Astrocyte of the cerebellum (primary cell): ENCODE measurements at regions of chr20 and their contacts with region 1.

Region 1: GRCh38 chr20:36773597-36774390 is at the start of gene DSN1:
- DNase-seq: peak; percentile 92
- H3K4me3 ChIP-seq: peak within 1 kb of the TSS; percentile 70
- CTCF ChIP-seq: peak; percentile 75

Region 2: GRCh38 chr20:36493013-36493800 is 280.6 kb before region 1 on chr20:
- in situ Hi-C with region 1: loop called (anchors 25 kb)
- DNase-seq: no peak
- H3K4me3 ChIP-seq: no peak overlapping the region
- CTCF ChIP-seq: peak; percentile 23

Region 3: DNA sequence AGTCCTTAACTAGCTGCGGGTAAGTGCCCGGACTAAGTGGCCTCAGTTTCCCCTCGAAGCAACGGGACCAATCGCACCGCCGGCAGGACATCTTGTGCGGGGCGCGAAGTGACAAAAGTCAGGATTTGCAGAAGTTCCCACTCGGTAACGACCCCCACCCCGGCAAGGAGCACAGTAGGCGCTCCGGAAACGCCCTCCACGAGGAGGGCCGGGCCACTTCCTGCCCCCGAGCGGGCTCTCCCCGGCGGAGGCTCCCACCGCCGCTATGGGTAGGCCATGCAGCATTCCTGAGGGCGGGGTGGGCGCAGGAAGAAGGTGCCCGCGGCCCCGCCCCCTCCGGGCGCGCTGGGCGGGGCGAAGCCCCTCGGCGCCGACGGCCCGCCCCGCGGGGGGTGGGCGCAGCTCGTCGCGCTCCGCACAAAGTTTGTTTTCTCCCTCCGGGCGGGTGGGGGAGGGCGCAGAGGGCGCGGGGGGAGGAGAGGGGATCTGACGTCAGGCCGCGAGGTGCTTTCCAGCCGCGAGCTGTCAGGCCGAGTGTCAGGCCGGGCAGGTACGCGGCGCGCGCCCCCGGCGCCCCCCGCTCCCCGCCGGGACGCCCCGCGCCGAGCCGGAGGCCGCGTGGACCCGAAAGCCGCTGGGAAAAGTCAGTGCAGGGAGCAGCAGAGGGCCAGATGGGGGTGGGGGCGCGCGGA is 200.5 kb before region 1 on chr20 and contains the start of gene TGIF2:
- in situ Hi-C with region 1: loop called (anchors 25 kb)
- DNase-seq: peak; percentile 33
- H3K4me3 ChIP-seq: peak within 1 kb of the TSS; percentile 82
- CTCF ChIP-seq: no peak